SK-N-SH (cell line): ENCODE measurements at regions of chr16 and their contacts with region 1.

Region 1: DNA sequence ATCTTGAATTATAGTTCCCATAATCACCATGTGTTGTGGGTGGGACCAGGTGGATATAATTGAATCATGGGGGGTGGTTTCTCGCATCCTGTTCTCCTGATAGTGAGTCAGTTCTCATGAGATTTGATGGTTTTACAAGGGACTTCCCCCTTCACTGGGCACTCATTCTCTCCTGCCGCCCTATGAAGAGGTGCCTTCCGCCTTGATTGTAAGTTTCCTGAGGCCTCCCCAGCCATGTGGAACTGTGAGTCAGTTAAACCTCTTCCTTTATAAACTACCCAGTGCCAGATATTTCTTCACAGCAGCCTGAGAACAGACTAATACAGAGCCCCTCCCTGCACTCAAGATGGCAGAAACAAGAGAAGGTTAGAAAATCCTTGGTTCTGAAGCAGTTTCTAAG is 26.4 kb downstream of the LDAF1 start:
- DNase-seq: no peak
- H3K4me3 ChIP-seq: no peak overlapping the region
- H3K27ac ChIP-seq: no peak overlapping the region
- H3K4me1 ChIP-seq: no peaks in the 10 kb centered on the region; a peak in 1 of 4 replicates
- H3K27me3 ChIP-seq: no peaks in the 10 kb centered on the region
- CTCF ChIP-seq: no peak
- EP300 ChIP-seq: no peak
- RAD21 ChIP-seq: no peak

Region 2: GRCh38 chr16:21060027-21060510 is 124.8 kb before region 1 on chr16:
- CTCF ChIA-PET with region 1: no interaction called
- POLR2A ChIA-PET with region 1: no interaction called
- DNase-seq: no peak
- H3K4me3 ChIP-seq: no peak overlapping the region
- H3K27ac ChIP-seq: no peak overlapping the region
- H3K4me1 ChIP-seq: no peaks in the 10 kb centered on the region
- H3K27me3 ChIP-seq: no peaks in the 10 kb centered on the region; the same call in 1 of the 2 replicates
- CTCF ChIP-seq: no peak
- EP300 ChIP-seq: no peak
- RAD21 ChIP-seq: no peak

Region 3: DNA sequence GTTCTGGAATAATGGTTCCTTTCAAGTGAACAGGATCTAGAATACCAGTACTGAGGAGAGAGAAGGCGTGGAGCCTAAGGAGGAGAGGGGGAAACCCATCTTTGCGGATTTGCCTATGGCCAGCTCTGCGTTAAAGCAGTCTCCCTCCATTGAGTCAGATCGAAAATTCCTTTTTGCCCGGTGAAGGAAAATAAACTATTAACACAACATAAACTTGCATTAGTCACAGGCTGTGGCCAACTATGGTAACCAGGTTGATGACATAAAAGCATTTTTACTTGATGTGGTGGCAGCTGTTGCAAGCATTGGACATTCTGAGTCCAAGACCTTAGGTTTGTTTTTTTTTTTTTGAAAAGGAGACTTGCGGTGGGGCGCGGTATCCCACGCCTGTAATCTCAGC is 17.5 kb before region 1 on chr16:
- CTCF ChIA-PET with region 1: interaction called, 11 read pairs
- POLR2A ChIA-PET with region 1: no interaction called
- DNase-seq: no peak
- H3K4me3 ChIP-seq: no peak overlapping the region
- H3K27ac ChIP-seq: no peak overlapping the region
- H3K4me1 ChIP-seq: peaks cover 0 to 4% of the 10 kb centered on the region in 2 experiments; a peak in 1 of 4 replicates
- H3K27me3 ChIP-seq: no peaks in the 10 kb centered on the region
- CTCF ChIP-seq: no peak
- EP300 ChIP-seq: no peak
- RAD21 ChIP-seq: no peak

Region 4: GRCh38 chr16:21283521-21284289 is 98.9 kb after region 1 on chr16:
- CTCF ChIA-PET with region 1: interaction called, 71 read pairs
- POLR2A ChIA-PET with region 1: no interaction called
- DNase-seq: peak; percentile 92
- H3K4me3 ChIP-seq: peak overlapping the region; percentile 52 to 60
- H3K27ac ChIP-seq: peak overlapping the region in 1 of 2 experiments; percentile 36; a peak in 1 of 4 replicates
- H3K4me1 ChIP-seq: no peaks in the 10 kb centered on the region
- H3K27me3 ChIP-seq: peaks cover 24% of the 10 kb centered on the region; the same call in 1 of the 2 replicates
- CTCF ChIP-seq: peak; percentile 57
- EP300 ChIP-seq: no peak
- RAD21 ChIP-seq: peak; percentile 49